ENCODE measurements at regions of chr12 and their contacts with region 1.

Region 1: DNA sequence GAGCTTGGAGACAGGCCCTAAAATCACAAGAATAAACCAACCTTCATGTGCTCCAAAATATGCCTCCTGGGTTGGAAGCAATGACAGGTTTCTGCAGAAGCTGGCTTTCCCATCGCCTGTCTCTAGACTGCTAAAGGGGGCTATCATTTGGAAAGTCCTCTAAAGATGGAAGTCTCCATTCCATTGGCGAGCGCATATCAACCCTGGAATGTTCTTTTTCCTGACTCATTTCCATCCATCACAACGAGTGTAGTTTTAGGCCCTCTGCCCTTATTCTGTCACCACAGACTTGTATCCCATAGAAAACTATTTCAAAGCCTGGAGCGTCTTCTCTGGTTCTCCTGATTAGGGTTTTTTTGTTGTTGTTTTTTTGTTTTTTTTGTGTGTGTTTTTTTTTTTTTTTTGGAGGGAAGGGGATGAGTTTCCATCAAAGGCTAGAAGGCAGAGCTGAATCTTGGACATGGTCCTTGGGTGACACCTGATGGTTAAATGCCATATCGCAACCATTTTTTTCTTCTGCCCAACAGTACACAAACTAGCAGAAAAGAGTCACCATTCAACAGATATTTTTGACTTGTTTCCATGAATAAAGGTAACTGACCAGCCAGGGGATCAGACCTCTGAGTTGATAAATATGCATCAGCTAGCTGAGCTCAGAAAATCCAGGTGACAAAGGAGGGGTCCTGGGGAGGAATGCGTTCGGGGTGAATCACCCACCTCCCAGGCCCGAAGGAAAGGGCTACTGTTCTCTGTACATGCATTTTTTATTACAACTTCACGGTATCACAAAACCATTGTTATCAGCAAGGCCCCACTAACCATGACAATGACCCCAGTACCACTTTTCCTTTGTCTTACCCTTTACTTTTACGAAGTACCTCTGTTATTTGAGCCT is 40.5 kb downstream of the KCNA5 start:
- DNase-seq: no peak
- ATAC-seq: peak; percentile 55
- H3K4me3 ChIP-seq: no peak overlapping the region
- H3K27ac ChIP-seq: no peak overlapping the region
- H3K4me1 ChIP-seq: no peaks in the 10 kb centered on the region
- H3K27me3 ChIP-seq: no peaks in the 10 kb centered on the region
- CTCF ChIP-seq: peak; percentile 69

Region 2: DNA sequence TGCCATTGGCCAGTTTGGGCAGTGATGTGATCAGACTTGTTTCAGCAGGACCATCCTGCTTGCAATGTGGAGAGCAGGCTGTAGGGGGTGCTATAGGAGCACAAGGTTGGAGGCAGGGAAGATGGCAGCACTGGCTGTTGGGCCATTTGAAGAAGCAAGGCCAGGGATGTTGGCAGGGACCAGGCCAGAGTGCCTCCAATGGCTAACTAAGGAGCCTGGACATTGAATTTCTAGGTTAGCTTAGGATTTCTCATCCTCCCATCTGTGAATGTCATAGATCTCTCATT is 728.2 kb before region 1 on chr12:
- intact Hi-C with region 1: no loop called
- DNase-seq: no peak
- ATAC-seq: peak; percentile 77
- H3K4me3 ChIP-seq: no peak overlapping the region
- H3K27ac ChIP-seq: no peak overlapping the region
- H3K4me1 ChIP-seq: no peaks in the 10 kb centered on the region
- H3K27me3 ChIP-seq: no peaks in the 10 kb centered on the region
- CTCF ChIP-seq: peak; percentile 30

Region 3: DNA sequence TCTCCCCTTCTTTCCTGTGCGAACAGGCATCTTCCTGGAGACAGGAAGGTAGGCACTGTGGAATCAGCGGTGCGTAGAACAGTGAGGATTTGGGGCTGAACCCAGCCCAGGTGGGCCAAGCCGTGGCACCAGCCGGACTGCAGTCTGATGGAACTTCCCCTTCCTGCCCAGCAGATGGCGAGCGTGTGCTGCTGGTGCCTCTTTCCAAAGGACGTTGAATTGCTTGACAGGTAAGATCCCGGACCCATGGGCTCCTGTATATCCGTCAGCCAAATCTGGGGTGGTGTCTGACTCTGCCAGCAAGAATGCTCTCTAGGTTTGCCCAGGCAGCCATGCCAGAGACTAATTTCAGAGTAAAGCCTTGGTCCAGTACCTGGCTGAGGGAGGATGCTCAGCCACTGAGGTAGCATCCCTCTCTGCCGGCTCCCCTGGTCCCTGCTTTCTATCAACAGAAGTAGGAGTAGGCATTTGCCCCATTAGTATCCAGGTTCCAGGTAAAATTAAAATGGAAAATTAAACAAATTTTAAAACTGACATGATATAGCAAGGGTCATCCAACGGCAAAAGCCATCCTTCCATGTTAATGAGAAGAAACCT is 61.6 kb before region 1 on chr12:
- intact Hi-C with region 1: loop called (anchors 10 kb)
- DNase-seq: no peak
- ATAC-seq: peak; percentile 75
- H3K4me3 ChIP-seq: no peak overlapping the region
- H3K27ac ChIP-seq: no peak overlapping the region
- H3K4me1 ChIP-seq: no peaks in the 10 kb centered on the region
- H3K27me3 ChIP-seq: no peaks in the 10 kb centered on the region
- CTCF ChIP-seq: peak; percentile 89

Region 4: GRCh38 chr12:5318874-5319273 is 234.7 kb after region 1 on chr12:
- intact Hi-C with region 1: no loop called
- DNase-seq: no peak
- ATAC-seq: no peak
- H3K4me3 ChIP-seq: no peak overlapping the region
- H3K27ac ChIP-seq: no peak overlapping the region
- H3K4me1 ChIP-seq: no peaks in the 10 kb centered on the region
- H3K27me3 ChIP-seq: no peaks in the 10 kb centered on the region
- CTCF ChIP-seq: no peak

Measured in upper lobe of right lung (tissue), 1 donor.